PC-9 (cell line): ENCODE measurements at regions of chrX and their contacts with region 1.

Region 1: GRCh38 chrX:96407057-96407456 is 277.6 kb upstream of the DIAPH2 start:
- DNase-seq: peak; percentile 63 to 82
- H3K4me3 ChIP-seq: peak overlapping the region; percentile 38; the same call in 1 of the 2 replicates
- H3K27ac ChIP-seq: peak overlapping the region; percentile 84
- H3K4me1 ChIP-seq: peaks cover 36% of the 10 kb centered on the region
- H3K27me3 ChIP-seq: no peaks in the 10 kb centered on the region
- CTCF ChIP-seq: no peak

Region 2: GRCh38 chrX:96538104-96538727 is 131.2 kb after region 1 on chrX:
- CTCF ChIA-PET with region 1: no interaction called
- POLR2A ChIA-PET with region 1: no interaction called
- intact Hi-C with region 1: loop called (anchors 1 kb)
- DNase-seq: peak; percentile 40 to 90
- H3K4me3 ChIP-seq: peak overlapping the region; percentile 43; the same call in 1 of the 2 replicates
- H3K27ac ChIP-seq: peak overlapping the region; percentile 93
- H3K4me1 ChIP-seq: peaks cover 38% of the 10 kb centered on the region
- H3K27me3 ChIP-seq: no peaks in the 10 kb centered on the region
- CTCF ChIP-seq: no peak

Region 3: DNA sequence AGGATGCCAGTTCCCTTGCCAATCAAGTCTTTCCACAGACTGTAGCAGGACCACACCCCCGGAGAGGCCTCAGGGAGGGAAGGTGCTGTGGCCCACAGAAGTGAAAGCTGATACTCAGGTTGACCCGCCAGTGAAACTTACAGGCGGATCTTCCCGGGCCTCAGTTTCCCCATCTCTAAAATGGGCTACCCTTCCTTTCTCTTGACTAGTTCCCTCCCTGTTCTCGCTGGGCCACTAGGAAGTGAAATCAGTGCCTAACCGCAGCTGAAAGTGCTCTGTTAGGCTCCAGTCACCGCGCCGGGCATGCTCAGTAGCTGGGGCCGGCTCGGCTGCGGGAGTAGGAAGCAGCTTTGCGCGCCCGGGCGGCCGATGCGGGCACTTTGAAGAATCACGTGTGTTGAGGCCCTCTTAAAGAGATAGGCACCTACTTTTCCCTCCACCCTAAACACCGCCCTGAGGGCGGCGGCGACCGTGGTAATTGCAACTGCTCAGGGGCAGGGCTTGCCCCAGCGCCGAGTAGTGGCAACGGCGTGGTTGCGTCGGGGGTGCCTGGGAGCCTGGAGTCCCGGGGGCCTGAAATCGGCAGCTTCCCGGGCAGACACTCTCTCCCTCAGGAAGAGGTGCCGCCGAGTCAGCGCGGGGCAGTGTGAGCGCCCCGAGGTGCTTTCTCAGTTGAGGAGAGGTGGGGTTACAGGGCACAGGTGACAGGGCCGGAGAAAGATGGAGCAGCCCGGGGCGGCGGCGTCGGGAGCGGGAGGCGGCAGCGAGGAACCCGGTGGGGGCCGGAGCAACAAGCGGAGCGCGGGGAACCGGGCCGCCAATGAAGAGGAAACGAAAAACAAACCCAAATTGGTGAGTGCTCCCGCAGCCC is 277.5 kb after region 1 on chrX and contains the start of gene DIAPH2:
- CTCF ChIA-PET with region 1: no interaction called
- POLR2A ChIA-PET with region 1: no interaction called
- intact Hi-C with region 1: loop called (anchors 10 kb)
- DNase-seq: peak; percentile 72 to 75
- H3K4me3 ChIP-seq: peak within 1 kb of the TSS; percentile 87
- H3K27ac ChIP-seq: peak within 1 kb of the TSS; percentile 87
- H3K4me1 ChIP-seq: peaks cover 19% of the 10 kb centered on the region
- H3K27me3 ChIP-seq: no peaks in the 10 kb centered on the region
- CTCF ChIP-seq: peak; percentile 37; the same call in 1 of the 2 replicates
- total RNA-seq, gene DIAPH2: 10.6 and 12.0 TPM in 2 replicates